ENCODE measurements at regions of chr19 and their contacts with region 1.

Region 1: DNA sequence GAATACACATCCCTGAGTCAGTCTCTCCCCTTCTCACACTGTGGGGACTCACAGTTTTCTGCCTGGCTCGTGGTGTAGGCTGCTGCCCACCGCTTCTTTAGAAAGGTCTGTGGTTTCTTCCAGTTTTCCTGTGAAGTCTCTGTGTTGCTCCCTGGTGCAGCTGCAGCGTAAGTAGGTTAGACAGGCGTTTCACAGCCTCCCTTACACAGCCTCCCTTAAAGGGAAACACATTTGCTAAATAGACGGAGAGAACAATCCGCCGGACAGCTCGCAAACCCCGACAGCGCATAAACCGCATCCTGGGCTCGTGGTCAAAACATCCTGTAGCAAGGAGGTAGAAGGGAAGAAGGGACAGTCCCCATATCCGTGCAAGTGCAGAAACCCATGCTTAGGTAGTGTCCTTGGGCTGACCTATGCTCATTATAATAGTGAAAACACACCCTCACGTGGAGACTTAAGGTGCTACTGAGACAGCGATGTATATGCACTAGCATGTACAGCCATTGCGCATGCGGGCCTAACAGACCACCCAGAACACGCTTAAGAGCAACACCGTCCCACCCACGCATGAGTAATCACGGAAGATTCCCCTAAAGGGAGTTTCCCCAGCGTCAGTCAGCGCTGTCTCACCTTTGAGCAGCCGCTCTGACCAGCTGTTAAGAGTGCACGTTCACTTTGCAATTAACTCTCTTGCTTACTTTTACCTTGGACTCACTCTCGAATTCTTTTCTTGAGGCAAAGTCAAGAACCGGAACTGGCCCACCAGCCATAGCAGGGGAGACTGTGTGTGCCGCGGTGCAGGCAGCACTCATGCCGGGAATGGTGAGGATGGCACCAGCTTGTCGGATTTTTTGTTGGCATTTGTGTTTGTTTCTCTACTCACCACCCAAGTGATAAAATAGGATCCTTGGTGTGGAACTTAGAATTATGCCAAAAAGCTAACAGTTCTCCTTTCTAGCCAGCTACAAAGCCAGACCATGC is 16.6 kb downstream of the SIGLEC8 start:
- DNase-seq: peak; percentile 96
- ATAC-seq: peak; percentile 91
- H3K4me3 Mint-ChIP-seq: peak overlapping the region; percentile 72
- H3K27ac Mint-ChIP-seq: peak overlapping the region; percentile 95
- H3K4me1 Mint-ChIP-seq: peaks cover 67% of the 10 kb centered on the region
- H3K27me3 Mint-ChIP-seq: no peaks in the 10 kb centered on the region

Region 2: DNA sequence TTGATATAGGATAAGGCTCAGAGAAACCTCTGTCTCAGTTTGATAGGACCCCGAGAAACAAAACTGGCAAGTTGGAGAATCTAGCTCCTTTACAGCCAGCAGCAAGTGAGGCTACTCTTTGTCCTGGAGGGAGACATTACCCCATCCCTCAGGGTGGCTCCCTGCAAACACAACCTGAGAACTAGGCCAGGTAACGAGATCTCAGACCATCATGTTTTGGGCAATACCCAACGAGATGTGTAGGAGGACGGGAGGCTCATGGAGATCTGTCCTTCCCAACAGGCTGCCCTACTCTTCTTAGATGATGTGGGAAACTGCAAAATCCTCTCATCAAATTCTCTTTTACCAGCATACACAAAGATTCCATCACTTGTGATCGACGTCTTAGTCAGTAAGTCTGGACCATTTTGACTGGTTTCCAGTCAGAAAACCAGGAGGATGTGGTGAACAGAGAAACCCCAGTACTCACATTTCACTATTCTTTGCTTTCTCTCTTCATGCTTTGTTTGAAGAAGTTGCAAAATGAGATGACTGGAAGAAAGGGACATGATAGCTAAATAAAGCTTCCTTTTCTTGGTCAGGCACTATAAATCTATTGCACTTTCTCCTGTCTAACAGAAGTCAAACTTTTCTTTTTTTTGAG is 327.5 kb before region 1 on chr19:
- CTCF ChIA-PET with region 1: no interaction called
- POLR2A ChIA-PET with region 1: no interaction called
- intact Hi-C with region 1: loop called in 1 of 2 experiments (anchors 1 kb)
- DNase-seq: peak; percentile 42
- ATAC-seq: peak; percentile 86
- H3K4me3 Mint-ChIP-seq: no peak overlapping the region
- H3K27ac Mint-ChIP-seq: peak overlapping the region; percentile 90
- H3K4me1 Mint-ChIP-seq: peaks cover 7% of the 10 kb centered on the region
- H3K27me3 Mint-ChIP-seq: no peaks in the 10 kb centered on the region

Region 3: GRCh38 chr19:51367565-51368365 is 73.9 kb before region 1 on chr19:
- CTCF ChIA-PET with region 1: interaction called, 3 read pairs
- POLR2A ChIA-PET with region 1: interaction called, 8 read pairs
- intact Hi-C with region 1: loop called in 1 of 2 experiments (anchors 1 kb)
- DNase-seq: peak; percentile 99
- ATAC-seq: peak; percentile 83
- H3K4me3 Mint-ChIP-seq: peak overlapping the region; percentile 90
- H3K27ac Mint-ChIP-seq: peak overlapping the region; percentile 97
- H3K4me1 Mint-ChIP-seq: peaks cover 58% of the 10 kb centered on the region
- H3K27me3 Mint-ChIP-seq: no peaks in the 10 kb centered on the region

Region 4: DNA sequence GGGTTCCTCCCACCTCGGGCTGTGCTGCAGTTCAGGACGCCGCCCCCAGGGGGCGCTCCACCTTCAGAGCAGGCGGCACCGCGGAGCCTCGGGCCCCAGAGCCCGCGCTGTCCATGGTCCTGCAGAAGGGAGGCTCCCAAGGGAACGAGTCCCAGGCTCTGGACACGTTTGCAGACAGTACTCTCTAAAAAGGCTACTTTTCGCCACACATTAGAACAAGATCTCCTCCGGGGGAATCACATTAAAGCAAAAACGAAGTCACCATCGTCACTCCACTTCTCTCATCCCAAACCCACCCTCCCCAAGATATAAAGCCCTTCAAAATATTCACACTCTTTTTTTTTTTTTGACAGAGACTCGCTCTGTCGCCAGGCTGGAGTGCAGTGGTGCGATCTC is 19.6 kb before region 1 on chr19:
- CTCF ChIA-PET with region 1: interaction called, 10 read pairs
- POLR2A ChIA-PET with region 1: no interaction called
- intact Hi-C with region 1: loop called (anchors 1 to 2 kb)
- DNase-seq: peak; percentile 94
- ATAC-seq: peak; percentile 60
- H3K4me3 Mint-ChIP-seq: no peak overlapping the region
- H3K27ac Mint-ChIP-seq: no peak overlapping the region
- H3K4me1 Mint-ChIP-seq: peaks cover 24% of the 10 kb centered on the region
- H3K27me3 Mint-ChIP-seq: peaks cover 20% of the 10 kb centered on the region

Region 5: GRCh38 chr19:51456541-51457290 is 15.0 kb after region 1 on chr19:
- CTCF ChIA-PET with region 1: no interaction called
- POLR2A ChIA-PET with region 1: no interaction called
- intact Hi-C with region 1: no loop called
- DNase-seq: no peak
- ATAC-seq: no peak
- H3K4me3 Mint-ChIP-seq: no peak overlapping the region
- H3K27ac Mint-ChIP-seq: no peak overlapping the region
- H3K4me1 Mint-ChIP-seq: no peaks in the 10 kb centered on the region
- H3K27me3 Mint-ChIP-seq: peaks cover 12% of the 10 kb centered on the region

Region 6: GRCh38 chr19:51480590-51480989 is 38.9 kb after region 1 on chr19:
- CTCF ChIA-PET with region 1: no interaction called
- POLR2A ChIA-PET with region 1: interaction called, 4 read pairs
- intact Hi-C with region 1: loop called in 1 of 2 experiments (anchors 2 kb)
- DNase-seq: peak; percentile 38
- ATAC-seq: no peak
- H3K4me3 Mint-ChIP-seq: no peak overlapping the region
- H3K27ac Mint-ChIP-seq: no peak overlapping the region
- H3K4me1 Mint-ChIP-seq: peaks cover 30% of the 10 kb centered on the region
- H3K27me3 Mint-ChIP-seq: peaks cover 22% of the 10 kb centered on the region

Region 7: GRCh38 chr19:51873097-51873496 is 431.4 kb after region 1 on chr19:
- CTCF ChIA-PET with region 1: no interaction called
- POLR2A ChIA-PET with region 1: no interaction called
- intact Hi-C with region 1: no loop called
- DNase-seq: no peak
- ATAC-seq: no peak
- H3K4me3 Mint-ChIP-seq: no peak overlapping the region
- H3K27ac Mint-ChIP-seq: no peak overlapping the region
- H3K4me1 Mint-ChIP-seq: no peaks in the 10 kb centered on the region
- H3K27me3 Mint-ChIP-seq: no peaks in the 10 kb centered on the region

Region 8: GRCh38 chr19:52171321-52172169 is 729.8 kb after region 1 on chr19 and contains the start of gene ZNF836:
- CTCF ChIA-PET with region 1: no interaction called
- POLR2A ChIA-PET with region 1: no interaction called
- intact Hi-C with region 1: loop called in 1 of 2 experiments (anchors 10 kb)
- DNase-seq: peak; percentile 96
- ATAC-seq: peak; percentile 96
- H3K4me3 Mint-ChIP-seq: peak within 1 kb of the TSS; percentile 87
- H3K27ac Mint-ChIP-seq: peak within 1 kb of the TSS; percentile 93
- H3K4me1 Mint-ChIP-seq: peaks cover 17% of the 10 kb centered on the region
- H3K27me3 Mint-ChIP-seq: no peaks in the 10 kb centered on the region
- total RNA-seq, gene ZNF836: 10.1 to 11.5 TPM